Activated CD4-positive, alpha-beta memory T cell treated with anti-CD3 and anti-CD28 coated beads for 36 hours (primary cell): ENCODE measurements at regions of chr13 and their contacts with region 1.

Region 1: DNA sequence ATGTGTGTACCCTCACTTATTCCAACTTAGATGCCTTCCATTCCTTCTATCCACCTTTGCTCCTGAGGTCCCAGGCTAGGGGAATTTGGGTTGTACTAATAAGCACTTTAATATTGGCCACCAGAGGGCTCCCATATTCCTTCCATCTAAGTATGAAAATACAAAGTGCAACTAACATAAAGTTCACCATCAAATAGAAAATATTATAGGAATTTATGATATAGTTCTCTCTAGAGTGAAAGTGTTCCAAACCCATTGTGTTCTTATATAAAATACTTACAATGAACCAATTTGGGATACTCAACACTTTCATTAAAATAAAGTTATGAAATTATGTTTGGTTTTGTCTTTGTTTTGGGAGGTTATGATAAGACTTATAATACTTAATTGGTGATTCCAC is 62.3 kb downstream of the ITGBL1 start:
- DNase-seq: no peak
- H3K4me3 Mint-ChIP-seq: no peak overlapping the region
- H3K27ac Mint-ChIP-seq: no peak overlapping the region
- H3K4me1 Mint-ChIP-seq: peaks cover 12% of the 10 kb centered on the region
- H3K27me3 Mint-ChIP-seq: peaks cover 2% of the 10 kb centered on the region

Region 2: GRCh38 chr13:101757446-101758039 is 242.8 kb after region 1 on chr13:
- CTCF ChIA-PET with region 1: interaction called, 25 read pairs
- POLR2A ChIA-PET with region 1: no interaction called
- intact Hi-C with region 1: loop called (anchors 1 kb)
- DNase-seq: no peak
- H3K4me3 Mint-ChIP-seq: no peak overlapping the region
- H3K27ac Mint-ChIP-seq: no peak overlapping the region
- H3K4me1 Mint-ChIP-seq: no peaks in the 10 kb centered on the region
- H3K27me3 Mint-ChIP-seq: peaks cover 15% of the 10 kb centered on the region

Region 3: DNA sequence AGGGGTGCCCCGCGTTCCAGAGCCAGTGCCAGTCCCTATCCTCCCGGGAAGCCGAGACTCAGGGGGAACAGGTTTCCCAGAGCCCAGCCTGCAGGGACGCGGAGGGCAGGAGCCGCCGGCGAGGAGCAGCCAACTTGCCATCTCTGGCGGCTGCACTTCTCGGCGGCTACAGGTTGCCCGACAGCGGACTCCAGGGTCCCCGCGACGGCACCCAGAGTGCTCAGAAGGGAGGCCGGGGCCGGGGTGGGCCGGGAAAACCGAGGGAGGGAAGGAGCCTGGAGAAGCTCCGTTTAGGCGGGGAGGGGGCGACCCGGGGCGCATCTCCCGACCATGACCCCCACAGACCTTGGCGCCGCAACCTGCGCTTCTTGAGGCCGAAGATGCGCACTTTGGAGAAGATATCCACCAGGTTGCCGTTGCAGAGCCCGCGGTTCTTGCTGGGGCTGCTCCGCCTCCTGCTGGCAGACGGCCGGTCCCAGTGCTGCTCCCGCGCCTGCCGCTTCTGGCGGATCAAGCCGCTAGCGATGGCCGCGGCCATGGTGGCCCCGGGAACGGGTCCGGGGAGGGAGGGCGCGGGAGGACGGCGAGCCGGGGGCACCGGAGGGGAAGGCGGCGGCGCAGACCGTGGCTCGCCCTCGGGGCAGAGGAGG is 401.4 kb after region 1 on chr13:
- CTCF ChIA-PET with region 1: no interaction called
- POLR2A ChIA-PET with region 1: no interaction called
- intact Hi-C with region 1: loop called (anchors 10 kb)
- DNase-seq: no peak
- H3K4me3 Mint-ChIP-seq: no peak overlapping the region
- H3K27ac Mint-ChIP-seq: no peak overlapping the region
- H3K4me1 Mint-ChIP-seq: no peaks in the 10 kb centered on the region
- H3K27me3 Mint-ChIP-seq: peaks cover 41% of the 10 kb centered on the region

Region 4: DNA sequence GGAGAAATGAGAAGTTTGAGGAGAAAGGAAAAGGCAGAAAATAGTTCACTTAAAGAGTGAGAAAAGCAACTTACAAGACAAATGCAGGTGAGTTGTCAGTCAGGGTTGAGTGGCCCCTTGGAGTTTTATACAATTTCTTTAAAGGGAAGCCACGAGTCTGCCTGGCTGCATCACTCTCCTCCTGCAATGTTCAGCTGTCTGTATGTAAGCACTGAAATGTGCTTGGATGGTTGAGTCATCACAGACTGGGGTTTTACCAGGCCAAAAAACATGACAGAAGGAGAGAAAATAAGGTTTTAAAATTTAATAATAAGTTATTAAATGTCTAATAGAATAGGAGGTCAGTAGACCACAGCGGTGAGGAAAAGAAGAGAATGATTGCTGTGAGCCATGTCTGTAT is 938.0 kb after region 1 on chr13:
- CTCF ChIA-PET with region 1: no interaction called
- POLR2A ChIA-PET with region 1: no interaction called
- intact Hi-C with region 1: loop called (anchors 10 kb)
- DNase-seq: no peak
- H3K4me3 Mint-ChIP-seq: no peak overlapping the region
- H3K27ac Mint-ChIP-seq: no peak overlapping the region
- H3K4me1 Mint-ChIP-seq: peaks cover 5% of the 10 kb centered on the region
- H3K27me3 Mint-ChIP-seq: peaks cover 2% of the 10 kb centered on the region